MCF 10A (cell line): ENCODE measurements at regions of chr3 and their contacts with region 1.

Region 1: DNA sequence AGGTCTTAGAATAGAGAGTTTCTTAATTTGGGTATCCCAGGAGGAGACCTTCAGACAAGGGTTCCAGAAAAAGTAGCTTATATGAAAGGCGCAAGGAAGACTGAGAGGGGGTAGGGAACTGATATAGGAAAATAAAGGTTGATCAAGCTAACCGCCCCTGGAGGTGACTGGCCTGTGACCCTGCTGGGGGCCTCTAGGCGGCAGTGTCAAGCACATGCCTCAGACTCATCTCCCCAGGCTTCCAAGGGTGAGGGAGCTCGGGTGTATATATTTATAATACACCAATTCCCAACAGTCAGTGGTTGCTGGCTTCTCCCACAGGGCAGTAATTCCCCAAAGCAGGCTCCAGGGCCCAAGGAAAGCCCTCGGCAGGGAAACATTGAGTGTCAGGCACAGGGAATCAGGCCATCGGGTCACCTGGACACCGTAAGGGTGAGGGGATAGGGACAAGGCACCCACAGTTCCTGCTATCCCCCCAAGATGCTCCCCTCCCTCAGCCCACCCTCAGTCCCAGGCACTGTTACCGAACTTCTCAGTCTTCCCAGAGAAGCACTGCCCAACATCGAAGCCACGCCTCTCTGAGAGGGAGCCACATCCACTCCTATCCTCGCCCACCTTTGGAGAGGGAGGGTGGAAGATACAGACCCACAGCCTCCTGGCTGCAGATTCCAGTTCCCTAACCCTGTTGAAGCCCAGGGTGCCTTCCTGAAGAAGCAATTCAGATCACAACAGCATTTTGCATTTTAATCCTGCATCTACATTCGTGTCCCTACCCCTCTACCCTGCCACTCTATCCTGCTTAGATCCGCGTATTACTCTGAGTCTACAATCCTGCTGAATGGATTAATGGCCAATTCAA is 19.5 kb upstream of the CAV3 start:
- DNase-seq: peak; percentile 47
- H3K4me3 Mint-ChIP-seq: no peak overlapping the region
- H3K27ac Mint-ChIP-seq: no peak overlapping the region
- H3K4me1 Mint-ChIP-seq: peaks cover 25% of the 10 kb centered on the region
- H3K27me3 Mint-ChIP-seq: no peaks in the 10 kb centered on the region
- CTCF ChIP-seq: peak; percentile 38

Region 2: GRCh38 chr3:8278448-8278847 is 435.7 kb before region 1 on chr3:
- CTCF ChIA-PET with region 1: no interaction called
- POLR2A ChIA-PET with region 1: no interaction called
- intact Hi-C with region 1: no loop called
- DNase-seq: peak; percentile 9
- H3K4me3 Mint-ChIP-seq: no peak overlapping the region
- H3K27ac Mint-ChIP-seq: no peak overlapping the region
- H3K4me1 Mint-ChIP-seq: no peaks in the 10 kb centered on the region
- H3K27me3 Mint-ChIP-seq: no peaks in the 10 kb centered on the region
- CTCF ChIP-seq: no peak

Region 3: DNA sequence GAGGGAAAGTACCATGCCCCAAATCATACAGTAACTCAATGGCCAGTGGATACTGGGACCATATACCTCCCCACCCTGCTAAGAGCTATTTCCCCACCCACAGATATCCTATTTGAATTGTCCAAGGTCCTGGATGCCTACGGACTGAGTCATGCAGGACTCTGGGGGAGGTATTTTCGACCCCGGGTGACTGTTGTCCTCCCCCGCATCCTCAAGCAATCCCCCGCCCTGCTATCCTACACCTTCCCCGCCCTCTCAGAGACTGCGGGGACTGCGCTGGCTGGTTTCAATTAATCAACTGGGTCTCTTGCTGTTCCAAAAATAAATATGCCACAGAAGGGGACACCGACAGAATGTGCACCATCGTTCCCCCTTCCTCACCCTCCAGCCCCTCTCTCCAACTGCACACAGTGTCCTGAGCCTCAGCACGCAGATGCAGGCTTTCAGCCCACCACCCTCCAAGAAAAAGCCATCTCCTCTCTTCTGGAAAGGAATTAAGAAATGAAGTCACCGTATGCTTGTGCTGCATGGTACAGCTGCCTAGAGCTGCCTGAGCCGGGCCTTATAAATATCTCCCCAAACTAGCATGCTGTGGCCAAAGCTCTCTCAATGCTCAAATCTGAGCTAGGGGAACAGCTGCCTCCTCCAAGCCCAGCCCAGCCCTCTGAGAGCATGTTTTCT is 27.6 kb after region 1 on chr3:
- CTCF ChIA-PET with region 1: no interaction called
- POLR2A ChIA-PET with region 1: interaction called, 10 read pairs
- intact Hi-C with region 1: loop called (anchors 1 kb)
- DNase-seq: peak; percentile 77
- H3K4me3 Mint-ChIP-seq: no peak overlapping the region
- H3K27ac Mint-ChIP-seq: peak overlapping the region; percentile 36
- H3K4me1 Mint-ChIP-seq: peaks cover 51% of the 10 kb centered on the region
- H3K27me3 Mint-ChIP-seq: no peaks in the 10 kb centered on the region
- CTCF ChIP-seq: no peak

Region 4: GRCh38 chr3:8755563-8756237 is 41.6 kb after region 1 on chr3:
- CTCF ChIA-PET with region 1: interaction called, 3 read pairs
- POLR2A ChIA-PET with region 1: no interaction called
- intact Hi-C with region 1: loop called (anchors 5 kb)
- DNase-seq: peak; percentile 20
- H3K4me3 Mint-ChIP-seq: no peak overlapping the region
- H3K27ac Mint-ChIP-seq: no peak overlapping the region
- H3K4me1 Mint-ChIP-seq: peaks cover 13% of the 10 kb centered on the region
- H3K27me3 Mint-ChIP-seq: no peaks in the 10 kb centered on the region
- CTCF ChIP-seq: no peak

Region 5: DNA sequence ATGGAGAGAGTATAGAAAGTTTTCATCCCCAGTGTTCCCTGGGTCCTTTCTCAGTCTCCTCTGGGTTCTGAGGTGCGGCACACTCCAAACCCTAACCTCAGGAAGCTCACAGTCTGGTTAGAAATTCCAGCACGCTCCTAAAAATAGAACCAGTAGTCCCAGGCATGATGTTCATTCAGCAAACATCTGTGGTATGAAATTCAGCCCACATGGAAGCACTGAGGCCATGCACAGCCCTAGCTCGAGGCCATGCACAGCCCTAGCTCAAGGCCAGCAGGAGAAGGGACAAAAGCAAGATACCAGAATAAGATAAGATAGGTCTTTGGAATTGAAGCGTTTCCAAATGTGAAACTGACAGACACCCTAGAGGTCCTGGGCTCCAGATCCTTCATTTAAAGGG is 137.6 kb after region 1 on chr3:
- CTCF ChIA-PET with region 1: no interaction called
- POLR2A ChIA-PET with region 1: no interaction called
- intact Hi-C with region 1: no loop called
- DNase-seq: peak; percentile 16
- H3K4me3 Mint-ChIP-seq: no peak overlapping the region
- H3K27ac Mint-ChIP-seq: peak overlapping the region; percentile 7
- H3K4me1 Mint-ChIP-seq: peaks cover 14% of the 10 kb centered on the region
- H3K27me3 Mint-ChIP-seq: no peaks in the 10 kb centered on the region
- CTCF ChIP-seq: no peak

Region 6: GRCh38 chr3:9402410-9403228 is 688.5 kb after region 1 on chr3:
- CTCF ChIA-PET with region 1: no interaction called
- POLR2A ChIA-PET with region 1: no interaction called
- intact Hi-C with region 1: no loop called
- DNase-seq: peak; percentile 48
- H3K4me3 Mint-ChIP-seq: peak overlapping the region; percentile 68
- H3K27ac Mint-ChIP-seq: peak overlapping the region; percentile 77
- H3K4me1 Mint-ChIP-seq: peaks cover 46% of the 10 kb centered on the region
- H3K27me3 Mint-ChIP-seq: no peaks in the 10 kb centered on the region
- CTCF ChIP-seq: no peak